ENCODE measurements at regions of chr15 and their contacts with region 1.

Region 1: DNA sequence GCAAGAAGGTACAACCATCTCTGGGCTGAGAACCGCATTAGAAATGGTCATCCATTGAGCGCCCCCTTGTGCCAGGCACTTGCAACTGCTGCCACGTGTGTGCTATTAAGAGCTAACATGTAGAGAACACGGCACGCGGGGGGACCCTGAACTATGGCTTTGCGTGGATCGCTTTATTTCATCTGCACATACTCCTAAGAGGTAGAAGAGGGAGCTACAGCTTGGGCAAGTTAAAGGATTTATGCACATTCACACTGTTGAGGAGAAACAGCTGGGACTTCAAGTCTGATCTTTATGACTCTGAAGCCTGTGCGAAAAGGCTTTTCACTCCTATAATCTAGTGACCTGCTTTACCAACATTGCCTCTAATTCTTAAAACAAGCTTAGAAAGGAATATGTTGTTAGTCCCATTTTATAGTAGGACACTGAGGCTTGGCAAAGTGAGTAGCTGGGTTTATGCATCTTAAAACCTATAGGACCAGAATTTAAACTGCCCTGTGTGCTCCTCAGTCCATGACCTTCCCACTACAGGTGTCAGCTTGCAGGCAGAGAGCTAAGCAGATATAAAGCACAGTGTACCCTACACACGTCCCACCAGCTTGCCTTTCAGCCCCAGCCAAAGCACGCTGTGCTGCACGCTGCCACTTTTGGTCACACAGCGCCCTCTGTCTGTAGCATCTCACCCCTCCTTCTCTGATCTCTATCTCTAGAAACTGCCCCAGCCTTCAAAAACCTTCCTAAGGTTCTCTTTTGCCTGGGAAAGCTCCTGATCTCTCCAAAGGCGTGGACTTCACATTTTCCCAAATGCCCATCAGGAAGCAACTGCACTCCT is 57.8 kb downstream of the STARD5 start:
- DNase-seq: peak; percentile 81 to 90 (median 87)
- H3K4me3 ChIP-seq: peak overlapping the region in 4 of 7 experiments; percentile 0 to 61 (median 35)
- H3K27ac ChIP-seq: no peak overlapping the region
- H3K4me1 ChIP-seq: peaks cover 7 to 29% (median 23%) of the 10 kb centered on the region in 4 experiments
- H3K27me3 ChIP-seq: no peaks in the 10 kb centered on the region

Region 2: DNA sequence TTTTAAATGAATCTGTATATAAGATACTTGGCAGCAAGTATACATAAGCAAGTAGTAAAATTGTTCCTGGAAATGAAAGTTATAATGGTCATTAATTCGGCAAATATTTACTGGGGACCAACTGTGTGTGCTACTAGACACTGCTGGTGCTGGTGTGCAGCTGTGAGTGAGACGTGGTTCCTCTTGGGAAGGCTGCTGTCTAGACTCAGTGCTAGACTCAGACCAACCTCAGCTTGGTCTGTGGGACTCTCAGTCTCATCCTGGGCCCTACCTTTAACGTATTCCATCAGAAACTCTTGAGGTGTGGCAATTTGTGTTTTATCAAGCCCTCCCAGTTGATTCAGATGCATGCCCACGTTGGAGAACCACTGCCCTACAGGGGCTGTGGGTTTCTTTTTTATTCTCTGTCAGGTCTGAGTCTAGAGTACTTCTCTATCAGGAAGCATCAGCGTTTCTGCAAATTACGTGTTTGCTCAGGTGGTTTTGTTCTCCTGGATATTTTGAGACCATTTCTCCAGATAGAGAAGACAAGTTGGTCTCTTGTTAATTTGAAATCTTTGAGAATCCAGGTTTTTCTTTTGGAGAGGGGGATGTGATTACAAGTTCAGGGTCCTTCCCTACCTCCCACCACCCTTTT is 258.6 kb before region 1 on chr15:
- CTCF ChIA-PET with region 1: no interaction called
- POLR2A ChIA-PET with region 1: no interaction called
- DNase-seq: peak in 1 of 3 donors; percentile 35
- H3K4me3 ChIP-seq: no peak overlapping the region
- H3K27ac ChIP-seq: no peak overlapping the region
- H3K4me1 ChIP-seq: peaks cover 3 to 17% (median 4%) of the 10 kb centered on the region in 4 experiments
- H3K27me3 ChIP-seq: no peaks in the 10 kb centered on the region

Region 3: DNA sequence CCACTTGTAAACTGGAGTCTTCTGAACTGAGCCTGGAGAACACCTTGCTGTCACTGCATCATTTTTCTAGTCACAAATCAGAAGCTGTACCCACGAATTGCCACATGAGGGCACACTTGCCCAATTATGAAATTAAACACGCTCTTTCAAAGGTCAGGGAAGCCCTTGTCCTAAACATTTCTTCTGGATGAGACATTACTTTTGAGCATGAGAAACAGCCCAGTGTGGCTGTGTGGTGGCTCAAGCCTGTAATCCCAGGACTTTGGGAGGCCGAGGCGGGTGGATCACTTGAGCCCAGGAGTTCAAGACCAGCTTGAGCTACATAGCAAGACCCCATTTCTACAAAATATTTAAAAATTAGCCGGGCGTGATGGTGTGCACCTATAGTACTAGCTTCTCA is 159.6 kb before region 1 on chr15:
- CTCF ChIA-PET with region 1: interaction called, 98 read pairs
- POLR2A ChIA-PET with region 1: interaction called, 4 read pairs
- DNase-seq: peak; percentile 52 to 69 (median 59)
- H3K4me3 ChIP-seq: no peak overlapping the region
- H3K27ac ChIP-seq: no peak overlapping the region
- H3K4me1 ChIP-seq: peaks cover 0 to 1% (median 0%) of the 10 kb centered on the region in 4 experiments
- H3K27me3 ChIP-seq: peaks cover 0 to 3% (median 0%) of the 10 kb centered on the region in 5 experiments

Region 4: GRCh38 chr15:81146006-81146405 is 120.2 kb before region 1 on chr15:
- CTCF ChIA-PET with region 1: interaction called, 294 read pairs
- POLR2A ChIA-PET with region 1: no interaction called
- DNase-seq: no peak
- H3K4me3 ChIP-seq: no peak overlapping the region
- H3K27ac ChIP-seq: no peak overlapping the region
- H3K4me1 ChIP-seq: peaks cover 0 to 9% (median 6%) of the 10 kb centered on the region in 4 experiments
- H3K27me3 ChIP-seq: peaks cover 0 to 8% (median 0%) of the 10 kb centered on the region in 5 experiments

Region 5: GRCh38 chr15:81163961-81164800 is 102.0 kb before region 1 on chr15:
- CTCF ChIA-PET with region 1: interaction called, 294 read pairs
- POLR2A ChIA-PET with region 1: no interaction called
- DNase-seq: peak; percentile 65 to 89 (median 85)
- H3K4me3 ChIP-seq: no peak overlapping the region
- H3K27ac ChIP-seq: no peak overlapping the region
- H3K4me1 ChIP-seq: peaks cover 7 to 37% (median 36%) of the 10 kb centered on the region in 4 experiments
- H3K27me3 ChIP-seq: no peaks in the 10 kb centered on the region

Region 6: DNA sequence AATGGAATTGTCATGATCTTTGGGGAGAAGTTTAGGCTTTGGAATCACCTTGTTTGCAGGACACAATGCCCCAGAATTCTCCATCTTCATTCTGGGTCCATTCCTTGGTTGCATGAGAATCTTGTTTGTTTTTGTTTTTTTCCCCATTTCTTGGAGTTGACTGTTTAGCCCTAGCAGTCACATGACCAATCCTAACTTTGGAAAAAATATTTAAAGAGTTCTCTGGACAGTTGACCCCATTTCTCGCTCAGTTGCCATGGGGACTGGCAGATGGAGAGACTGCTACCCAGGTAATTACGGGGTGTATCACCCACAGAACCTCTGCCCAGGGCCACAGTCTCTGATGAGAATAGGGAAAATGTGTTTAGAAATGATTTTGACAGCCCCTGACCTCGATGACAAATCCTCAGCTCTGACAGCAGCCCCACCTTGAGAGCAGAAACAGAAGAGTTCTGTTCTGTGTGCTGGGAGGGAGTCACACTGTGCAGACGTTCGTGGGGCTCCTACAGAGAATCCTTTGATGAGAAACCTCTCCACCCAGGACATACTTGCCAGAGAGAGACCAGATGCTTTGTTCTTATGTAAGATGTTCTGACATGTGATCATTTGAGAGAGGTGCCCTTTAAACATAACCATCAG is 11.8 kb before region 1 on chr15:
- CTCF ChIA-PET with region 1: interaction called, 13 read pairs
- POLR2A ChIA-PET with region 1: no interaction called
- DNase-seq: no peak
- H3K4me3 ChIP-seq: no peak overlapping the region
- H3K27ac ChIP-seq: no peak overlapping the region
- H3K4me1 ChIP-seq: no peaks in the 10 kb centered on the region
- H3K27me3 ChIP-seq: no peaks in the 10 kb centered on the region

Region 7: GRCh38 chr15:81410318-81410753 is 144.2 kb after region 1 on chr15:
- CTCF ChIA-PET with region 1: interaction called, 11 read pairs
- POLR2A ChIA-PET with region 1: no interaction called
- DNase-seq: peak; percentile 81 to 92 (median 89)
- H3K4me3 ChIP-seq: peak overlapping the region in 1 of 7 experiments; percentile 56
- H3K27ac ChIP-seq: no peak overlapping the region
- H3K4me1 ChIP-seq: peaks cover 4 to 24% (median 20%) of the 10 kb centered on the region in 4 experiments
- H3K27me3 ChIP-seq: no peaks in the 10 kb centered on the region

Measured in common myeloid progenitor, CD34-positive (primary cell).